CD14-positive monocyte (primary cell): ENCODE measurements at regions of chr20 and their contacts with region 1.

Region 1: DNA sequence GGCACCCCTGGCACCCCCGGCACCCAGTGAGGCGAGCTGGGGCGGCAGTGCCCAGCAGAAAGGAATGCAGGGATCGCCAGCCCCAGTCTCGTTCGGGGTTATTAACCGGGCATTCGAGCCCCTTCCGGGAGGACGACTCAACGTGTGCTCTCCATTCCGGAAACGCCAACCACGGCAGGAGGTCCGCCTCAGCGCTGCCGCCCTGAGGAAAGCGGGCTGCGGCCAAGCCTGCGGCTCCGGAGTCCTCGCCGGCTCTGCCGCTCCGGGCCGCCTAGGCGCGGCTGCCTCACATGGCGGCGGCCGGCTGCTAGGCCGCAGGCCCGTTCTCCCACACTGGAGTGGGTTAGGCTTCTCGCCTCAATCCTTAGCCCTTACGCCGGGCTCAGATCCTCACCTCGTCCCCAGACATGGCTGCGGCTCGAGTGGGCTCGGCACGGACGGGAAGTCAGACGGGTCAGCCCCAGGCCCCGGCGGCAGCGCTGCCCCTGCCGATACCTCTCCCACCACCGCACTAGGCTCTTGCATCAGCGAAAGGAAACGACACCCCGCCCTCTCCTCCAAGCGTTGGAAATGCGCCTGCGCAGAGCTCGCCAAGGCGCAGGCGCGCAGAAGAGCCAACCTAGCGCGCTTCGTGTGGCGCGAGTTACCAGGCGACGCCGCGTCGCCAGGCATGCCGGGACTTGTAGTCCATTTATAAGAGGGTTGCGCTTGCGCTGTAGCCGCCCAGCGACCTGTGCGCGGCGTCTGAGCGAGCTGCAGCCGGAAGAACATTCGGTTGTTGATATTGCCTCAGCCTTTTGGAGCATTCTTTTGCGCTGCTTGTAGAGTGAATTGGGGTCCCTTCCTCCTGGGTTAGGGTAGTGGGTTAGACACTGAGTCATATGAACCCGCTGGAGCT is at the start of gene EIF2S2:
- DNase-seq: peak; percentile 99 to 100 (median 100)
- H3K4me3 ChIP-seq: peak within 1 kb of the TSS; percentile 88 to 99 (median 93)
- H3K4me3 Mint-ChIP-seq: peak within 1 kb of the TSS; percentile 93 to 97
- H3K27ac ChIP-seq: peak within 1 kb of the TSS; percentile 94
- H3K27ac Mint-ChIP-seq: peak within 1 kb of the TSS; percentile 91 to 97 (median 95)
- H3K4me1 ChIP-seq: peaks cover 19 to 39% of the 10 kb centered on the region in 2 donors
- H3K4me1 Mint-ChIP-seq: peaks cover 37% of the 10 kb centered on the region
- H3K27me3 ChIP-seq: no peaks in the 10 kb centered on the region
- H3K27me3 Mint-ChIP-seq: no peaks in the 10 kb centered on the region
- CTCF ChIP-seq: no peak
- polyA plus RNA-seq, gene EIF2S2: 18.8 to 20.1 (median 18.9) TPM

Region 2: GRCh38 chr20:33810885-33811777 is 300.8 kb before region 1 on chr20 and contains the start of gene CHMP4B:
- intact Hi-C with region 1: loop called in 1 of 2 experiments (anchors 5 kb)
- DNase-seq: peak; percentile 98 to 99 (median 98)
- H3K4me3 ChIP-seq: peak within 1 kb of the TSS; percentile 82 to 90 (median 90)
- H3K4me3 Mint-ChIP-seq: peak within 1 kb of the TSS; percentile 96 to 98
- H3K27ac ChIP-seq: peak within 1 kb of the TSS; percentile 100
- H3K27ac Mint-ChIP-seq: peak within 1 kb of the TSS; percentile 100
- H3K4me1 ChIP-seq: peaks cover 52 to 60% of the 10 kb centered on the region in 2 donors
- H3K4me1 Mint-ChIP-seq: peaks cover 57% of the 10 kb centered on the region
- H3K27me3 ChIP-seq: no peaks in the 10 kb centered on the region
- H3K27me3 Mint-ChIP-seq: peaks cover 0 to 2% (median 0%) of the 10 kb centered on the region in 3 donors
- CTCF ChIP-seq: no peak
- polyA plus RNA-seq, gene CHMP4B: 7.1 to 181 (median 10.0) TPM

Region 3: GRCh38 chr20:34150306-34151000 is 38.5 kb after region 1 on chr20:
- intact Hi-C with region 1: no loop called
- DNase-seq: no peak
- H3K4me3 ChIP-seq: no peak overlapping the region
- H3K4me3 Mint-ChIP-seq: no peak overlapping the region
- H3K27ac ChIP-seq: no peak overlapping the region
- H3K27ac Mint-ChIP-seq: no peak overlapping the region
- H3K4me1 ChIP-seq: no peaks in the 10 kb centered on the region
- H3K4me1 Mint-ChIP-seq: no peaks in the 10 kb centered on the region
- H3K27me3 ChIP-seq: no peaks in the 10 kb centered on the region
- H3K27me3 Mint-ChIP-seq: peaks cover 0 to 7% (median 2%) of the 10 kb centered on the region in 3 donors
- CTCF ChIP-seq: no peak